ENCODE measurements at regions of chr2 and their contacts with region 1.

Region 1: GRCh38 chr2:73926493-73927338 is at the start of gene DGUOK:
- DNase-seq: peak; percentile 99
- ATAC-seq: peak; percentile 99
- H3K4me3 Mint-ChIP-seq: peak within 1 kb of the TSS; percentile 87
- H3K27ac Mint-ChIP-seq: peak within 1 kb of the TSS; percentile 96
- H3K4me1 Mint-ChIP-seq: peaks cover 49% of the 10 kb centered on the region
- H3K27me3 Mint-ChIP-seq: no peaks in the 10 kb centered on the region
- total RNA-seq, gene DGUOK: 97.6 to 119 TPM

Region 2: DNA sequence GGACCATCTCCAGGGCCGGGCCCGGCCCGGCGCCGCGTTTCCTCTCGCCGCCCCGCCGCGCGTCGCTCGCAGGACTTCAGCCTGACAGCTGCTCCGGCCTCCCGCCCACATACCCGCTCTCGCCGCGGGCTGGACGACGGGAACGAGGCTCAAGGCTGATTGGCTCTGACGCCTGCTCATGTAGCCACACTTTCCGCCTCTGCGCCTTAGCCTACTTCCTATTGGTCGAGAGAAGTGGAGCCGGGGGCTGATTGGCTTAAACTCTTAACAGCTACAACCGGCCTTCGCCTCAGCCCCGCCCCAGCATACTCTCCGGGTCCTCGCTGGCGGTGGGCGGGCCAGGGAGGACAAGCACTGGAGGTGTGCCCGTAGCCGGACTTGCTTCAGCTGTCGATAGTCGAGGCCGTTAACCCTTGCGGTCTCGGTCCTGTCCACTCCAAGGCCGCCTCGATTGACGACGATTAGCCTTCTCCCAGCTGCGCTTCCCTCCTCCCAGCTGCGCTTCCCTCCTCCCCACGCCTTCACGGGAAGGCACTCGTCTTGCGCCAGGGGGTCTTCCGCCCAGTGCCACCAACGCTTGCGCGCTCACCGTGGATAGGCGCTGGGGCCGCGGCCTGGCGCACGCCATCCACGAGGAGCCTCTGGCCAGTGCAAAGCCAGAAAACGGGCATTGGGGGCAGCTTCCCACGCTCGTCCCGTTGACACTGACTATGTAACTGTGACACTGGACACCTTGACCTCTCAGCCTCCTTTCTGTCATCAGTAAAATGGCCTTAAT is 693.4 kb before region 1 on chr2 and contains the start of gene PRADC1:
- CTCF ChIA-PET with region 1: no interaction called
- POLR2A ChIA-PET with region 1: no interaction called
- intact Hi-C with region 1: loop called in 1 of 2 experiments (anchors 10 kb)
- DNase-seq: peak; percentile 96
- ATAC-seq: peak; percentile 89
- H3K4me3 Mint-ChIP-seq: peak within 1 kb of the TSS; percentile 92
- H3K27ac Mint-ChIP-seq: peak within 1 kb of the TSS; percentile 98
- H3K4me1 Mint-ChIP-seq: peaks cover 32% of the 10 kb centered on the region
- H3K27me3 Mint-ChIP-seq: no peaks in the 10 kb centered on the region
- total RNA-seq, gene PRADC1: 11.8 to 12.1 TPM

Region 3: DNA sequence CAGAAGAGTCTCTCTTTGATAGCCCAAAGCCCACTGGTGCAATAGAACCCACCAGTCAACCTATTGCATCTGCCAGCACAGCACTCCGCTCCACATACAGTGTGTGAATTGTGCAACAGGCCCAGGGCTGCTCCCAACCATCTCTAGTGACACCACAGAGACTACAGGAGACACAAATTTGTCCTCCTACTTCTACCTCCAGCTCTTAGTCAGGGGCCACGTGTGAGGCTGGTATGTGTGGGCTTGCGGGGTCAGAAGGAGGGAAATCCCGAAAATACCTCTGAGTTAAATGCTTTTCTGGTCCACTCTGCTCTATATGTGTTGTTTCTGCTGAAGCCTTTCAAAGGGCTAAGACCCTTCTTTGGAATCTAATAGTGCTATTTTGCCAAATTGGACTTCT is 18.0 kb after region 1 on chr2:
- CTCF ChIA-PET with region 1: interaction called, 4 read pairs
- POLR2A ChIA-PET with region 1: no interaction called
- intact Hi-C with region 1: loop called in 1 of 2 experiments (anchors 2 kb)
- DNase-seq: peak; percentile 58
- ATAC-seq: peak; percentile 86
- H3K4me3 Mint-ChIP-seq: no peak overlapping the region
- H3K27ac Mint-ChIP-seq: peak overlapping the region; percentile 62
- H3K4me1 Mint-ChIP-seq: peaks cover 88% of the 10 kb centered on the region
- H3K27me3 Mint-ChIP-seq: no peaks in the 10 kb centered on the region

Region 4: GRCh38 chr2:74002487-74003391 is 76.0 kb after region 1 on chr2:
- CTCF ChIA-PET with region 1: interaction called, 3 read pairs
- POLR2A ChIA-PET with region 1: no interaction called
- intact Hi-C with region 1: loop called in 1 of 2 experiments (anchors 1 kb)
- DNase-seq: peak; percentile 89
- ATAC-seq: peak; percentile 81
- H3K4me3 Mint-ChIP-seq: peak overlapping the region; percentile 77
- H3K27ac Mint-ChIP-seq: peak overlapping the region; percentile 71
- H3K4me1 Mint-ChIP-seq: peaks cover 81% of the 10 kb centered on the region
- H3K27me3 Mint-ChIP-seq: no peaks in the 10 kb centered on the region

Region 5: DNA sequence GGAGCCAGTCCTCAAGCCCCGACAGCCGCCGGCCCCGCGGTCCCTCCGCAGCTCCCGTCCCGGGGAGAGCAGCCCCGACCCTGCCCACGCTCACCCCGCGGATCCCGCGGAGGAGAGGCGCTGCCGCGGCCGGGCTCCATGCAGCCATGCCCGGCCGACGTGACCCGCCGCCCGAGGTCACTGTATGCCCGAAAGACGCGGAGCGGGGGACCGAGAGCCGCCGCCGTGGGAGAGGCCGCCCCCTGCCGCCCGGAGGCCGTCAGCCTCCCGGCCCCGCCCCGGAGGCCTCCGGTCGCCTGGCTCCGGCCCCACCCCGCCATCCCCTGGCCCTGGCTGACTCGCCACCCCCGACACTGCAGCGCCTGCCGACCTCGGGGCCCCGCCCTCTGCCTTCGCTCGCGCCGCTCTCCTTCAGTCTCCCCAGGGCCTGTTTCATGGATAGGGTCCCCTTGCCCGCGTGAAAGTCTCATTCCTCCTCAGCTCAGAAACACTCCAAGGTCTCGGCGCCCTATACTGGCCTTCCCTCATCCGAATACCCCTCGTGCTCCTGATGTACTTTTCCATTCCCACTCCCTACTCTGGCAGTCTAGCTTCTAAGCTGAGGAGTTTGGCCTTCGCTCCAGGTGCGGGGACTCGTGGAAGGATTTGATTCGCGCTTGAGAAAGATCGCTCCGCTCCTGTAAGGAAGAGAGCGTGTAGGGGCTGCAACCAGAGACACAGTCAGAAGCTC is 221.2 kb after region 1 on chr2 and contains the start of gene BOLA3:
- CTCF ChIA-PET with region 1: interaction called, 3 read pairs
- POLR2A ChIA-PET with region 1: interaction called, 3 read pairs
- intact Hi-C with region 1: loop called in 1 of 2 experiments (anchors 5 kb)
- DNase-seq: peak; percentile 94
- ATAC-seq: peak; percentile 94
- H3K4me3 Mint-ChIP-seq: no peak within 1 kb of the TSS
- H3K27ac Mint-ChIP-seq: no peak within 1 kb of the TSS
- H3K4me1 Mint-ChIP-seq: peaks cover 5% of the 10 kb centered on the region
- H3K27me3 Mint-ChIP-seq: no peaks in the 10 kb centered on the region
- total RNA-seq, gene BOLA3: 119 to 130 TPM

Region 6: DNA sequence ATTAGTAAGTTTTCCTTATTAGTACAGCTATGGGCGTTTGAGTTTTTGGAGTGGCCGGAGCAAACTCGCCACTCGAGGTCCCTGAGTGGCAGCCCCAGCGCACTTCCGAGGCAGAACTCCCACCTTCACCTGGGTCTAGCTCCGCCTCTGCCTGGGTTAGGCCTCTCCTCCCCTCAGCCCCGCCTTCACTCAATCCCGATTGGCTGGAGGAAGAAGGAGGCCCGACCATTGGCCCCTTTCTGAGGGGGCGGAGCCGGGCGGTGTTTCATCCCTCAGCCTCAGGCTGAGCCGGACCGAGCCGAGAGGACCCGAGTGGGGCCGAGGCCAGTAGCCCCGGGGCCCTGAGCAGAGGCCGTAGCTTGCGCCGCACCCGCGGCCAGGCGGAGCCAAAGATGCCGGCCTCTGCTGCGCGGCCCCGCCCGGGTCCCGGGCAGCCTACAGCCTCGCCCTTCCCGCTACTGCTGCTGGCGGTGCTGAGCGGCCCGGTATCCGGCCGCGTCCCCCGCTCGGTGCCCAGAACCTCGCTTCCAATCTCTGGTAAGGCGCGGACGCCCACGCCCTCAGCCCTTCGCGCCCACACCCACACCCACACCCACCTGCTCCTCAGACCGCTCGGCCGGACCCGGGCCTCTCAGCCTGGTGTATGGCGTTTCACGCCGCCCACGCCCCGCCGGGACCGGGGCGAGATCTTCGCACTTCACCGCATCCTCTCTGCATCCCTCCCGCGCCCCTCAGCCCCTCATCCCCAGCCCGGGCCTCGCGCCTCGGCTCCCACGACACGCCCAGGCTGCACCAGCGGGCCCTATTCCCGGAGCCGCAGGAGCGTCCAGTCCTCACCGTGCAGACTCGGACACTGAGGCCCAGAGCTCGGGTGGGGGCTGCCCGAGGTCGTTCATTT is 727.5 kb after region 1 on chr2 and contains the start of gene SEMA4F:
- CTCF ChIA-PET with region 1: no interaction called
- POLR2A ChIA-PET with region 1: no interaction called
- intact Hi-C with region 1: loop called in 1 of 2 experiments (anchors 1 kb)
- DNase-seq: peak; percentile 97
- ATAC-seq: peak; percentile 100
- H3K4me3 Mint-ChIP-seq: peak within 1 kb of the TSS; percentile 76
- H3K27ac Mint-ChIP-seq: peak within 1 kb of the TSS; percentile 49
- H3K4me1 Mint-ChIP-seq: peaks cover 13% of the 10 kb centered on the region
- H3K27me3 Mint-ChIP-seq: peaks cover 7% of the 10 kb centered on the region
- total RNA-seq, gene SEMA4F: 5.7 to 7.4 TPM